MCF 10A (cell line): ENCODE measurements at regions of chr12 and their contacts with region 1.

Region 1: GRCh38 chr12:1939801-1940607 is 21.6 kb upstream of the CACNA2D4 start:
- DNase-seq: peak; percentile 74
- H3K4me3 Mint-ChIP-seq: no peak overlapping the region
- H3K27ac Mint-ChIP-seq: no peak overlapping the region
- H3K4me1 Mint-ChIP-seq: peaks cover 4% of the 10 kb centered on the region
- H3K27me3 Mint-ChIP-seq: peaks cover 34% of the 10 kb centered on the region
- CTCF ChIP-seq: peak; percentile 86

Region 2: GRCh38 chr12:1634590-1635191 is 305.3 kb before region 1 on chr12:
- CTCF ChIA-PET with region 1: interaction called, 21 read pairs
- POLR2A ChIA-PET with region 1: interaction called, 4 read pairs
- intact Hi-C with region 1: loop called (anchors 1 kb)
- DNase-seq: peak; percentile 77
- H3K4me3 Mint-ChIP-seq: no peak overlapping the region
- H3K27ac Mint-ChIP-seq: no peak overlapping the region
- H3K4me1 Mint-ChIP-seq: peaks cover 5% of the 10 kb centered on the region
- H3K27me3 Mint-ChIP-seq: peaks cover under 1% of the 10 kb centered on the region
- CTCF ChIP-seq: peak; percentile 78

Region 3: DNA sequence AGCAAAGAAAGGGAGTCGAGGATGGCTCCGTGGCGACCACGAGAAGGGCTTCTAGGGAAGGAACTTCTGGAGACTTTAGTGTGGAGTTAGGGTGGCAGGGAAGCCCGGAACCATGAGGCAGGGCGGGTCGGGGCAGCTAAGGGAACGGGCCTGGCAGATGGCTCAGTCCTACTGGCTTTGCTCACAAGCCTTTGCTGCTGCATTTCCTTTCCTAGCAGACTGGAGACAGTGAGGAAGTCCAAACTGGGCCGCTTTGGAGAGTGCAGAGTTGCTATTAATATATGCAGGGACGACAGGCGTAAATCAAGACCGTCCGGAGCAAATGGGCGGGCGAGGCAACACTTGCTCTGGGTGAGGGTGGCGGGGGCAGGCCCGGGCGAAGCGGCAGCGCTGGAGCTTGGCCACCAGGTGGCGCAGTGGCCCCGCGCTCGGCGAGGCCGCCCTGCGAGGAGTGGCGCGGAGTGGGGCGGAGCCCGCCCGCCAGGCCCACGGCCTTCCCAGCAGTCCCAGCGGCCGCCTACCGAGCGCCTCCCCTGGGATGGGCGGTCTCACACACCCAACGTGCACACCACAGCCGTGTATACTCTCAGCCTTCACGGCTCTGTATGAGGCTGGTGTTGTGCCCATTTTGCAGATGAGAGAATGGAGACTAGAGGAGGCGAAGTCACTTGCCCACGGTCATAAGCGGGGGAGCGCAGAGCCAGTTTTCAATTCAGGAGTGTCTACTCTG is 144.1 kb before region 1 on chr12:
- CTCF ChIA-PET with region 1: interaction called, 141 read pairs
- POLR2A ChIA-PET with region 1: interaction called, 16 read pairs
- intact Hi-C with region 1: loop called (anchors 1 kb)
- DNase-seq: peak; percentile 84
- H3K4me3 Mint-ChIP-seq: peak overlapping the region; percentile 74
- H3K27ac Mint-ChIP-seq: no peak overlapping the region
- H3K4me1 Mint-ChIP-seq: peaks cover 11% of the 10 kb centered on the region
- H3K27me3 Mint-ChIP-seq: no peaks in the 10 kb centered on the region
- CTCF ChIP-seq: peak; percentile 92

Region 4: DNA sequence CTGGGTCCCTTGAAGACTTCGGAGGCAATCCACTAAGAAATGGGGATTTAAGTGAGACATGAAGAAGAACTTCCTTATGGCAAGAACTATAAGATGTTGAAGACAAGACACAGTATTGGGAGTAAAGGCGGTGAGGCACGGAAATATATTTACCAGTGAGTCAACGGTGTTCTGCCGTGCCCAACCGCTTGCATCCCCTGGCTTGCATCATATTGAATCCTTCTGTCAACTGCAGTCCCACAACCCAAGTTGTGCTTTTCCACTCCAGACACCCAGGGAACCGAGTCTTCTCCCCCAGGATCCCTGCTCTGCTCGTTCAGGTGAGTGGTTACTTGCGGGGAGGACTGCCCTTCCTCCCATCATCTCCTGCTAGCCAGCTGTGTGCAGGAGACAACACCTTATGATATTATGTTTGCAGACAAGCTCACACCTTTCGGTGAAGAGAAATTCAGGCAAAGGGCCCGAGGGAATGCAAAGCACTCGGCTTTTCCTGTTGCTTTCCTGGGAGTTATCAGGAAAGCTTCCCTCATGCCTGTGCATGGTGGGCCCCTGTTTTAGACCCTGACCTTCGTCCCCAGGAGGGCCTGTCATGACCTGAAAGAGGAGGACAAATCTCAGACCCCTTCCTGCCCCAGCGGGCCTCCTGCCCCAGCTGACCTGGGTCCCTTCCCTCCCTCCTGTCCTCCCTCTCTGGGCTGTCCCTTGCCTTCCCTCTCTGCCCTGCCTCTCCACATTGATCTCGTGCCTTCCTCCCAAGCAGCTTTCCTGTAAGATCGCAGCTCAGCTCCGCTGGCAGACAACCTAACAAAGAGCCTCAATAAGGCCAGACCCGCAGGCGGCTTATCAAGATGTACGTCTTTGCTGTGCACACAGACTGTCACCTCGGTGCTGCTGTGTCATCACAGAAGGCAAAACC is 123.9 kb before region 1 on chr12:
- CTCF ChIA-PET with region 1: interaction called, 10 read pairs
- POLR2A ChIA-PET with region 1: no interaction called
- intact Hi-C with region 1: no loop called
- DNase-seq: peak; percentile 17
- H3K4me3 Mint-ChIP-seq: no peak overlapping the region
- H3K27ac Mint-ChIP-seq: no peak overlapping the region
- H3K4me1 Mint-ChIP-seq: peaks cover 5% of the 10 kb centered on the region
- H3K27me3 Mint-ChIP-seq: peaks cover 48% of the 10 kb centered on the region
- CTCF ChIP-seq: no peak

Region 5: DNA sequence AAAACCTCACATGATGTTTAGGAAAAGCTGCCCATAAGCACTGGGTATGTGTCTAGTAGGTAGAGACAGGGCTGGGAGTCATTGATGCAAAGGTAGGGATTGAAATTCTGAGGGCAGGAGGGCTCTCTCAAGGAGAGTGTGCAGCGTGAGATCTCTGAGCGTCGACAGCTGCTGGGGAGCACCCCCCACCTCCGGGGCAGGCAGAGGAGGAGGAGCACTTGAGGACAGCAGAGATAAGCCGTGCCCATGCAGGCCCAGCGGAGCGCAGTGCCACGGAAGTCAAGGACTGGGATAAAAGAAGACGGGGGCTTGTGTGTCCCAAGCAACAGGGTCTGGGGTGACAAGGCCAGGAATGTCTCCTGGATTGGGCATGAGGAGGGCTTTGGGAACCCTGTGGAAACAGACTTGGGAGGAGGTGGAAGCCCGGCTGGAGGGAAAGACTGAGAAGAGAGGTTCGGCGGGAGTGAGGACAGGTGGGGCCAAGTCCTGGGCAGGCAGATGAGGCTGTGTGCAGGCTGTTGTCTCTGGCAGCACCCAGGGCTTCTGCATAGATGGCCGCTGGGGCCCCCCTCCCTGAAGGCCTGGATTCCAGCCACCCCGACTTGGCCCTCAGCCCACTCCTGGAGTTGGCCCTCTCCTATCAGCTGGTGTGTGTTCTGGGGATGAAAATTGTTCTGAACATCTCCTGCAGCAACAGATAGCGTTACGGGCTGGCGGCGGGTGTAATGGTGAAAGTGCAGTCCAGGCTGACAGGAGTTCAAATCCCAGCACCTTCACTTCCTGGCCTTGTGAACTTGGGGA is 23.4 kb before region 1 on chr12:
- CTCF ChIA-PET with region 1: interaction called, 12 read pairs
- POLR2A ChIA-PET with region 1: no interaction called
- intact Hi-C with region 1: no loop called
- DNase-seq: no peak
- H3K4me3 Mint-ChIP-seq: no peak overlapping the region
- H3K27ac Mint-ChIP-seq: no peak overlapping the region
- H3K4me1 Mint-ChIP-seq: no peaks in the 10 kb centered on the region
- H3K27me3 Mint-ChIP-seq: peaks cover 15% of the 10 kb centered on the region
- CTCF ChIP-seq: no peak

Region 6: GRCh38 chr12:1966561-1967226 is 26.7 kb after region 1 on chr12:
- CTCF ChIA-PET with region 1: interaction called, 14 read pairs
- POLR2A ChIA-PET with region 1: no interaction called
- intact Hi-C with region 1: no loop called
- DNase-seq: no peak
- H3K4me3 Mint-ChIP-seq: no peak overlapping the region
- H3K27ac Mint-ChIP-seq: no peak overlapping the region
- H3K4me1 Mint-ChIP-seq: no peaks in the 10 kb centered on the region
- H3K27me3 Mint-ChIP-seq: peaks cover 37% of the 10 kb centered on the region
- CTCF ChIP-seq: no peak

Region 7: DNA sequence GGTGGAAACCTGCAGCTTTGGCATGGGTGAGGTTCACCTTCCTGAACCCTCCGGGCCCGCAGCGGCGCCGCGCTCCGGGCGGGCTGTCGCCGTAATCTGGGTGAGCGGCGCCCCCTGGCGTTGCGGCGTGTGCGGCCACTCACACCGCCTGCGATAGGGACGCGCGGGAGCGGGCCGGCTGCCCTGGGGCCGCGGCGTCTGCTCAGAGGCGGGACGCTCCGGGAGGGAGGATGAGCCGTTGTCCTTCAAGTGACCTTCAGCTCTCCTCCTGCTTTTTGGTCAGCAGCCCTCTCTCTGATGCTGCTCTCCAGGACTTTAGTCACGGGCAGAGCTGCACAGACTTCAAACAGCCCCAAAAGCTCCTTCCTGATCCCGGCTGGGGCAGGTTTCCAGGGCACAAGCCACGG is 643.1 kb after region 1 on chr12:
- CTCF ChIA-PET with region 1: no interaction called
- POLR2A ChIA-PET with region 1: no interaction called
- intact Hi-C with region 1: loop called (anchors 1 kb)
- DNase-seq: peak; percentile 53
- H3K4me3 Mint-ChIP-seq: no peak overlapping the region
- H3K27ac Mint-ChIP-seq: no peak overlapping the region
- H3K4me1 Mint-ChIP-seq: no peaks in the 10 kb centered on the region
- H3K27me3 Mint-ChIP-seq: peaks cover 70% of the 10 kb centered on the region
- CTCF ChIP-seq: peak; percentile 94